HEK293 (cell line): ENCODE measurements at regions of chr6 and their contacts with region 1.

Region 1: GRCh38 chr6:22880686-22881433 is 311.5 kb downstream of the HDGFL1 start:
- H3K4me3 ChIP-seq: no peak overlapping the region
- H3K27ac ChIP-seq: no peak overlapping the region
- H3K4me1 ChIP-seq: peaks cover 3% of the 10 kb centered on the region
- CTCF ChIP-seq: no peak

Region 2: GRCh38 chr6:22550971-22551670 is 329.7 kb before region 1 on chr6:
- CTCF ChIA-PET with region 1: no interaction called
- POLR2A ChIA-PET with region 1: no interaction called
- H3K4me3 ChIP-seq: no peak overlapping the region
- H3K27ac ChIP-seq: no peak overlapping the region
- H3K4me1 ChIP-seq: no peaks in the 10 kb centered on the region
- CTCF ChIP-seq: no peak

Region 3: GRCh38 chr6:22821664-22822320 is 59.1 kb before region 1 on chr6:
- CTCF ChIA-PET with region 1: no interaction called
- POLR2A ChIA-PET with region 1: no interaction called
- H3K4me3 ChIP-seq: no peak overlapping the region
- H3K27ac ChIP-seq: no peak overlapping the region
- H3K4me1 ChIP-seq: peaks cover 2% of the 10 kb centered on the region; the same call in 1 of the 2 replicates
- CTCF ChIP-seq: no peak

Region 4: GRCh38 chr6:22892452-22892851 is 11.6 kb after region 1 on chr6:
- CTCF ChIA-PET with region 1: interaction called, 10 read pairs
- POLR2A ChIA-PET with region 1: no interaction called
- H3K4me3 ChIP-seq: no peak overlapping the region
- H3K27ac ChIP-seq: no peak overlapping the region
- H3K4me1 ChIP-seq: peaks cover 8% of the 10 kb centered on the region
- CTCF ChIP-seq: no peak

Region 5: DNA sequence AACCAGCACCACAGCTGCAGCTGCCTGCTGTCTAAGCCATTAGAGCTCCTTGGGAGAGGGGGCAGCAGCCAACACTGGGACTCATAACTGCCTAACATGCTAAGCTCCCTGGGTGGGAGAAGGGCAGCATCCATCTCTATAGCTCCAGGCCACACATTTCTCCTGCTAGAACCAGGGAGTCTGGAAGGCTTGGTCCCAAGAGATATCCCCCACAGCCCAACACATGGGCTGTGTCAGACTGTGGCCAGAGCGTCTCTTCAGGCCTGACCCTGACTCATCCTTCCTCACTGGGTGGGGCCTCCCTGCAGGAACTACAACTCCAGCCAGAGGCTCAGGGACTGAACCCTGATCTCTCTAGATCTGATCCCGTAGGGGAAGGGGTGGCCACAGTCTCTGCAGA is 99.6 kb after region 1 on chr6:
- CTCF ChIA-PET with region 1: no interaction called
- POLR2A ChIA-PET with region 1: no interaction called
- H3K4me3 ChIP-seq: no peak overlapping the region
- H3K27ac ChIP-seq: no peak overlapping the region
- H3K4me1 ChIP-seq: no peaks in the 10 kb centered on the region
- CTCF ChIP-seq: no peak